Activated CD4-positive, alpha-beta T cell treated with anti-CD3 and anti-CD28 coated beads for 36 hours (primary cell): ENCODE measurements at regions of chr1 and their contacts with region 1.

Region 1: GRCh38 chr1:168178638-168179437 is at the start of gene TIPRL:
- DNase-seq: peak; percentile 97
- ATAC-seq: peak; percentile 90
- H3K4me3 Mint-ChIP-seq: no peak within 1 kb of the TSS
- H3K27ac Mint-ChIP-seq: no peak within 1 kb of the TSS
- H3K4me1 Mint-ChIP-seq: peaks cover 9% of the 10 kb centered on the region
- H3K27me3 Mint-ChIP-seq: no peaks in the 10 kb centered on the region
- total RNA-seq, gene TIPRL: 52.5 to 57.5 TPM

Region 2: GRCh38 chr1:166838766-166839599 is 1339.9 kb before region 1 on chr1 and contains the start of gene POGK:
- CTCF ChIA-PET with region 1: no interaction called
- POLR2A ChIA-PET with region 1: no interaction called
- intact Hi-C with region 1: loop called in 1 of 2 experiments (anchors 1 kb)
- DNase-seq: peak; percentile 93
- ATAC-seq: peak; percentile 97
- H3K4me3 Mint-ChIP-seq: peak within 1 kb of the TSS; percentile 90
- H3K27ac Mint-ChIP-seq: peak within 1 kb of the TSS; percentile 98
- H3K4me1 Mint-ChIP-seq: peaks cover 56% of the 10 kb centered on the region
- H3K27me3 Mint-ChIP-seq: no peaks in the 10 kb centered on the region
- total RNA-seq, gene POGK: 36.2 to 40.6 TPM

Region 3: GRCh38 chr1:167721617-167722151 is 457.2 kb before region 1 on chr1 and contains the start of gene MPZL1:
- CTCF ChIA-PET with region 1: no interaction called
- POLR2A ChIA-PET with region 1: no interaction called
- intact Hi-C with region 1: loop called in 1 of 2 experiments (anchors 2 kb)
- DNase-seq: peak; percentile 95
- ATAC-seq: peak; percentile 99
- H3K4me3 Mint-ChIP-seq: peak within 1 kb of the TSS; percentile 83
- H3K27ac Mint-ChIP-seq: peak within 1 kb of the TSS; percentile 80
- H3K4me1 Mint-ChIP-seq: peaks cover 53% of the 10 kb centered on the region
- H3K27me3 Mint-ChIP-seq: no peaks in the 10 kb centered on the region
- total RNA-seq, gene MPZL1: 22.3 to 23.0 TPM

Region 4: GRCh38 chr1:167936068-167936929 is 242.5 kb before region 1 on chr1 and contains the start of gene DCAF6:
- CTCF ChIA-PET with region 1: no interaction called
- POLR2A ChIA-PET with region 1: interaction called, 4 read pairs
- intact Hi-C with region 1: loop called (anchors 1 to 5 kb)
- DNase-seq: peak; percentile 97
- ATAC-seq: peak; percentile 84
- H3K4me3 Mint-ChIP-seq: peak within 1 kb of the TSS; percentile 89
- H3K27ac Mint-ChIP-seq: peak within 1 kb of the TSS; percentile 97
- H3K4me1 Mint-ChIP-seq: peaks cover 34% of the 10 kb centered on the region
- H3K27me3 Mint-ChIP-seq: no peaks in the 10 kb centered on the region
- total RNA-seq, gene DCAF6: 25.6 to 28.8 TPM

Region 5: DNA sequence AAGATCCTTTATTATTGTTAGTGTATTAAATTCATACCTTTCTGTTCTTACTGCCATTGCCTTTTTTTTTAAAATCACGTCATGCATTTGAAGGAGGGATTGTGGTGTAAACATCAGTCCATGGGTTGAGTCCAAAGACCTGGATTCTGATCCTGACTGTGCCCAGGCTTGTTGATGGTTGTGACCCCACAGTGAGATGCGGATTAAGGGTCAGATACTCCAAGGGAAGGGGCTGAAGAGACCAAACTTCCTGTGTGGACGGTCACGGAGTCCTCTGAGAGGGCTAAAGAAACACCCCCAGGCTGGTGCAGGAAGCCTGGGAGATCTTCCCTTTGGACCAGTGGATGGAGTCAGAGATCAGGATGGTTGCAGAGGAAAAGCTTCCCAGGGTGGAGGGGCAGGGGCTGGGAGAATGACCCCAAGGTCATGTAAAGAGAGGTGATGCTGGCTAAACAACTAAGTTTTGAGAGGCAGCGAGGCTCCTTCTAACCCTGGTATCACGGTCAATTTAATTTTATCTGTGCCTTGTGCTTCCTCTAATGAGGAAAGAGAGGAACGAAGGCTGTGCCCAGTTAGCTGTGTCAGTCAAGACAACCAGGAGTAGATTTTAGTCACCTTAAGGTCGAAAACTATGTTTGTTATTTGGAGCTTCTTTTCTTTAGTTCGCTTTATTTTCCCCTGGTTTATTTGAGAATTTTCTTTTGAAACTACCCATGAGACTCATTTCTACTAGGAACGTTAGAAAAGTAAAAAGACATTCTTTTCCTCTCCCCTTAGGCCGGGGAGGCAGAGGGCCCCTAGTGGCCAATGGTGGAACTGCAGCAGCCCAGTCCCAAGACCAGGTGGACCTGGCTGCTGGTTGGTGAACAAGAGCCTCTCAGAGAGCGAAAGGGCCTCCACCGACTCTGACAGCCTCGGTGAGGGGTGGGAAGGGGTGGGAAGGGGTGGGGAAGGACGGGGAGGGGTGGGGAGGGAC is 33.4 kb before region 1 on chr1:
- CTCF ChIA-PET with region 1: interaction called, 6 read pairs
- POLR2A ChIA-PET with region 1: no interaction called
- intact Hi-C with region 1: loop called in 1 of 2 experiments (anchors 1 kb)
- DNase-seq: peak; percentile 93
- ATAC-seq: peak; percentile 100
- H3K4me3 Mint-ChIP-seq: no peak overlapping the region
- H3K27ac Mint-ChIP-seq: no peak overlapping the region
- H3K4me1 Mint-ChIP-seq: peaks cover 13% of the 10 kb centered on the region
- H3K27me3 Mint-ChIP-seq: peaks cover 1% of the 10 kb centered on the region

Region 6: GRCh38 chr1:168234846-168235547 is 56.2 kb after region 1 on chr1:
- CTCF ChIA-PET with region 1: interaction called, 4 read pairs
- POLR2A ChIA-PET with region 1: interaction called, 4 read pairs
- intact Hi-C with region 1: loop called in 1 of 2 experiments (anchors 1 kb)
- DNase-seq: peak; percentile 58
- ATAC-seq: peak; percentile 77
- H3K4me3 Mint-ChIP-seq: no peak overlapping the region
- H3K27ac Mint-ChIP-seq: peak overlapping the region; percentile 55
- H3K4me1 Mint-ChIP-seq: peaks cover 57% of the 10 kb centered on the region
- H3K27me3 Mint-ChIP-seq: no peaks in the 10 kb centered on the region